MCF 10A (cell line): ENCODE measurements at regions of chr4 and their contacts with region 1.

Region 1: GRCh38 chr4:74675673-74676279 is 118.5 kb downstream of the BTC start:
- DNase-seq: peak; percentile 80
- H3K4me3 Mint-ChIP-seq: peak overlapping the region; percentile 19
- H3K27ac Mint-ChIP-seq: no peak overlapping the region
- H3K4me1 Mint-ChIP-seq: peaks cover 9% of the 10 kb centered on the region
- H3K27me3 Mint-ChIP-seq: no peaks in the 10 kb centered on the region
- CTCF ChIP-seq: peak; percentile 80

Region 2: GRCh38 chr4:74189331-74190043 is 486.3 kb before region 1 on chr4:
- CTCF ChIA-PET with region 1: interaction called, 3 read pairs
- POLR2A ChIA-PET with region 1: no interaction called
- intact Hi-C with region 1: loop called (anchors 1 kb)
- DNase-seq: peak; percentile 71
- H3K4me3 Mint-ChIP-seq: no peak overlapping the region
- H3K27ac Mint-ChIP-seq: no peak overlapping the region
- H3K4me1 Mint-ChIP-seq: no peaks in the 10 kb centered on the region
- H3K27me3 Mint-ChIP-seq: no peaks in the 10 kb centered on the region
- CTCF ChIP-seq: peak; percentile 61

Region 3: GRCh38 chr4:74320559-74321118 is 355.1 kb before region 1 on chr4:
- CTCF ChIA-PET with region 1: interaction called, 45 read pairs
- POLR2A ChIA-PET with region 1: interaction called, 10 read pairs
- intact Hi-C with region 1: loop called (anchors 1 kb)
- DNase-seq: peak; percentile 90
- H3K4me3 Mint-ChIP-seq: no peak overlapping the region
- H3K27ac Mint-ChIP-seq: no peak overlapping the region
- H3K4me1 Mint-ChIP-seq: peaks cover 36% of the 10 kb centered on the region
- H3K27me3 Mint-ChIP-seq: no peaks in the 10 kb centered on the region
- CTCF ChIP-seq: peak; percentile 67

Region 4: GRCh38 chr4:74376888-74377483 is 298.8 kb before region 1 on chr4:
- CTCF ChIA-PET with region 1: interaction called, 22 read pairs
- POLR2A ChIA-PET with region 1: interaction called, 3 read pairs
- intact Hi-C with region 1: loop called (anchors 1 kb)
- DNase-seq: peak; percentile 79
- H3K4me3 Mint-ChIP-seq: peak overlapping the region; percentile 71
- H3K27ac Mint-ChIP-seq: peak overlapping the region; percentile 97
- H3K4me1 Mint-ChIP-seq: peaks cover 20% of the 10 kb centered on the region
- H3K27me3 Mint-ChIP-seq: no peaks in the 10 kb centered on the region
- CTCF ChIP-seq: peak; percentile 71

Region 5: GRCh38 chr4:74499986-74500781 is 175.6 kb before region 1 on chr4:
- CTCF ChIA-PET with region 1: no interaction called
- POLR2A ChIA-PET with region 1: no interaction called
- intact Hi-C with region 1: no loop called
- DNase-seq: no peak
- H3K4me3 Mint-ChIP-seq: no peak overlapping the region
- H3K27ac Mint-ChIP-seq: no peak overlapping the region
- H3K4me1 Mint-ChIP-seq: peaks cover 20% of the 10 kb centered on the region
- H3K27me3 Mint-ChIP-seq: peaks cover 11% of the 10 kb centered on the region
- CTCF ChIP-seq: no peak

Region 6: GRCh38 chr4:74543231-74543670 is 132.5 kb before region 1 on chr4:
- CTCF ChIA-PET with region 1: interaction called, 171 read pairs
- POLR2A ChIA-PET with region 1: interaction called, 14 read pairs
- intact Hi-C with region 1: loop called (anchors 2 kb)
- DNase-seq: no peak
- H3K4me3 Mint-ChIP-seq: no peak overlapping the region
- H3K27ac Mint-ChIP-seq: no peak overlapping the region
- H3K4me1 Mint-ChIP-seq: peaks cover 12% of the 10 kb centered on the region
- H3K27me3 Mint-ChIP-seq: no peaks in the 10 kb centered on the region
- CTCF ChIP-seq: no peak

Region 7: DNA sequence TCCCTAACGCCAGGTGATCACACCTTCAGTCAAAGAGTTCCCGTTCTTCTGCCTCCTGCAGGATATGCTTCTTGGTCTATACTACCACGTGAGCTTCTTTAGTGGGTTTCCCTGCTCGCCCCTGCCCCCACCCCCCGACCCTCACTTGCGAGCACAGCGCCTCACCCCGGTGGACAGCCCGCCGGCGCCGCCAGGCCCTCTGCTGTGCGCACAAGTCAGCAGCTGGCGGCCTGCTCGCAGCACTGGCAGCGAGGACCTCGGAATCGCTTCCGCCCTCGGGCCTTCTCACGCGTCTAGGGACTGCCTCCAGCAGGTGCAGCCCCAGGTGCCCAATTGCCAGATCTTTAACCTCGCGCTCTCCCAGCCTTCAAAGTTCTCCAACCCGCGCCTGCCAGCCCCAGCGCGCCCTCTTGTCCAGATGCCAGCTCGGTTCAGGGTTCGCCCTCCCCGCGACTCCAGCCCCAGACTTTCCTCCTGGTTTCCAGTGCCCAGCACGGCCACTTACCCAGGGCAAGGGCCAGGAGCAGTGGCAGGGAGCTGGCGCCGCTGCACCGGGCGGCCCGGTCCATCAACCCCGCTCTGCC is 118.1 kb after region 1 on chr4:
- CTCF ChIA-PET with region 1: interaction called, 13 read pairs
- POLR2A ChIA-PET with region 1: interaction called, 3 read pairs
- intact Hi-C with region 1: loop called (anchors 1 kb)
- DNase-seq: peak; percentile 59
- H3K4me3 Mint-ChIP-seq: peak overlapping the region; percentile 97
- H3K27ac Mint-ChIP-seq: peak overlapping the region; percentile 92
- H3K4me1 Mint-ChIP-seq: peaks cover 11% of the 10 kb centered on the region
- H3K27me3 Mint-ChIP-seq: peaks cover 18% of the 10 kb centered on the region
- CTCF ChIP-seq: peak; percentile 36

Region 8: DNA sequence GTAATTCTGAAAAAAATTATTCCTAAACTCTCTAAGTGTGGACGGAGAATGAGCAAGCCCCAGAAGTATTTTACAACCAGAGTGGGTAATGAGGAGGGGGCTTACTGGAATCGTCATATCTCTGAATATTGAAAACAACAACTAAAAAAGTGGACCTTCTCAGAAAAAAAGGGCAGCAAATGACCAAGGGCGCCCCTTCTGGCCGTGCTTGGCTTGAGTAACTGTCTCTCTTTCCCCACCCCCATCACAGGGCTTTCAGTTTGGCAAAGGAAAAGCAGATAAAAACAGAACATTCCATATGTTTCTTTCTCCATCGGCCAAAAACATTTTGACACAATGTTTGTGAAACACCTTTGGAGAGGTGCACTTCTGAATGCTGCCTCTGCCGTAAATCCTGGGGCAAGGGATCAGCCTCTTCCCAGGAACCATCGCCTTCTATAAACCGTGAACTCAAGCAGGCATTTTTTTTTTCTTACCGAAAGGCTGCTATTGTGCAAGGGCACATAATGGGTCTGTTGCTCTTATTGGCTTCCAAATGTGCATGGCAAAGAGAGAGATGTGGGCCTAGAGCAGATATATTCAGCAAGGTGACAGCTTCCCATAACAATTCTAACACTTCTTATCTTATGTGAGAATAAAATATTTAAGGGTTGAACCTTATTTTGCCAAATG is 372.6 kb after region 1 on chr4:
- CTCF ChIA-PET with region 1: no interaction called
- POLR2A ChIA-PET with region 1: no interaction called
- intact Hi-C with region 1: no loop called
- DNase-seq: peak; percentile 5
- H3K4me3 Mint-ChIP-seq: no peak overlapping the region
- H3K27ac Mint-ChIP-seq: no peak overlapping the region
- H3K4me1 Mint-ChIP-seq: no peaks in the 10 kb centered on the region
- H3K27me3 Mint-ChIP-seq: no peaks in the 10 kb centered on the region
- CTCF ChIP-seq: peak; percentile 10